ENCODE measurements at regions of chr14 and their contacts with region 1.

Region 1: DNA sequence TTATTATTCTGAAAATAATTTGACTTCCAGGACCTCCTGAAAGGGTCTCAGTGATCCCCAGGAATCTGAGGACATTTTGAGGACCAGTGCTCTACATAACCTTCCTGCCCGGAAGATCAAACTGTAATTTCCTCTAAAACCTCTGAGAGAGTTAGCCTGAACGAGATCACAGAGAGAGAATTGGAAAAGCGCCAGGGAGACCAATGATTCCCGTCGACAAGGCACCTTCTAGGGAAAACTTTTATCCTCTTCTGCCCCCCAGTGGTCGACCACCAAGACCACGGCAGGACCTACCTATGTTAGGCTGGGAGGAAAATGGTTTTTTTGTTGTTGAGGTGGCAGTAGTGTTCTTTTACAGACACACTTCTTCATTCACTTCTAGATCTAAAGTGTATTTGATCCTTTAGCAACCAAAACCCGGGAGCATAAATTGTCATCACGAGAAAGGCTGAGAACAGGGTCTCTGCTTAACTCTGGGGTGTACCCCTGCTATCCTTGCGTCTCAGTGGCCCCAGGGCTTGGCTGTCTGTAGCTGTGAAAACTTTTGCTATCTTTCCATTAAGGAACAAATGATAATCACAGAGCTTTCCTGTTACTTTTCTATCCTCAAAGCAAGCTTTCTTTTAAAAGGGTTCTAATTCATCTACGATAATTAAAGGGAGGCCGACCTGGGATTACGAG is 62.9 kb upstream of the NID2 start:
- DNase-seq: peak; percentile 82 to 87
- ATAC-seq: peak; percentile 96 to 99
- H3K4me3 ChIP-seq: no peak overlapping the region
- H3K27ac ChIP-seq: peak overlapping the region in 1 of 2 experiments; percentile 37; a peak in 1 of 6 replicates
- H3K4me1 ChIP-seq: peaks cover 6% of the 10 kb centered on the region; the same call in 1 of the 3 replicates
- CTCF ChIP-seq: peak; percentile 74
- EP300 ChIP-seq: no peak
- POLR2A ChIP-seq: no peak
- RAD21 ChIP-seq: peak; percentile 87

Region 2: GRCh38 chr14:51996148-51996746 is 135.5 kb before region 1 on chr14:
- CTCF ChIA-PET with region 1: interaction called, 30 read pairs
- POLR2A ChIA-PET with region 1: no interaction called
- DNase-seq: peak in 1 of 2 experiments; percentile 54
- ATAC-seq: no peak
- H3K4me3 ChIP-seq: no peak overlapping the region
- H3K27ac ChIP-seq: no peak overlapping the region
- H3K4me1 ChIP-seq: peaks cover under 1% of the 10 kb centered on the region; the same call in 1 of the 3 replicates
- CTCF ChIP-seq: peak; percentile 70
- EP300 ChIP-seq: no peak
- POLR2A ChIP-seq: no peak
- RAD21 ChIP-seq: peak; percentile 60 to 74

Region 3: DNA sequence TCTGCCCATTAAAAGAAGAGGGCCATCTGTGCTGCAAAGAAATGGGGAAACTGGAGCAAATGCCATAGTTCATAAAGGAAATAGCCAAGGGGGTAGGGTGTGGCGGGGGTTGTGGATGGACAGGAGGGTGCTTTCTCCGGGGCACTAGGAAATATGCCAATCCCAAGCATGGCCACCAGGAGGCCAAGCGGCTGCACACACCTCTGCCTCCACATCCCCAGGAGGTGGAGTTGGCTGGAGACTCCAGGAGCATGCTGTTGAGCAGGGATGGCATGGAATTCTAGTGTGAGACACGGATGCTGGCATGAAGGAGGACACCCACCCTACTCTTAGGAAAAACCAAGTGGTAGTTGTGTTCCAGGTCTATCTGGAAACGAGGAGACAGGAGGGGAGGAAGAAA is 88.1 kb before region 1 on chr14:
- CTCF ChIA-PET with region 1: interaction called, 68 read pairs
- POLR2A ChIA-PET with region 1: no interaction called
- DNase-seq: peak; percentile 60 to 73
- ATAC-seq: peak; percentile 86 to 98
- H3K4me3 ChIP-seq: no peak overlapping the region
- H3K27ac ChIP-seq: no peak overlapping the region
- H3K4me1 ChIP-seq: peaks cover 19% of the 10 kb centered on the region
- CTCF ChIP-seq: peak; percentile 55
- EP300 ChIP-seq: no peak
- POLR2A ChIP-seq: no peak
- RAD21 ChIP-seq: peak; percentile 64

Region 4: GRCh38 chr14:52106840-52107239 is 24.9 kb before region 1 on chr14:
- CTCF ChIA-PET with region 1: interaction called, 10 read pairs
- POLR2A ChIA-PET with region 1: no interaction called
- DNase-seq: peak in 1 of 2 experiments; percentile 2
- ATAC-seq: peak in 1 of 2 experiments; percentile 56; a peak in 3 of 6 replicates
- H3K4me3 ChIP-seq: no peak overlapping the region
- H3K27ac ChIP-seq: peak overlapping the region; percentile 56 to 70; a peak in 5 of 6 replicates
- H3K4me1 ChIP-seq: peaks cover 31% of the 10 kb centered on the region
- CTCF ChIP-seq: no peak
- EP300 ChIP-seq: no peak
- POLR2A ChIP-seq: no peak
- RAD21 ChIP-seq: no peak

Region 5: DNA sequence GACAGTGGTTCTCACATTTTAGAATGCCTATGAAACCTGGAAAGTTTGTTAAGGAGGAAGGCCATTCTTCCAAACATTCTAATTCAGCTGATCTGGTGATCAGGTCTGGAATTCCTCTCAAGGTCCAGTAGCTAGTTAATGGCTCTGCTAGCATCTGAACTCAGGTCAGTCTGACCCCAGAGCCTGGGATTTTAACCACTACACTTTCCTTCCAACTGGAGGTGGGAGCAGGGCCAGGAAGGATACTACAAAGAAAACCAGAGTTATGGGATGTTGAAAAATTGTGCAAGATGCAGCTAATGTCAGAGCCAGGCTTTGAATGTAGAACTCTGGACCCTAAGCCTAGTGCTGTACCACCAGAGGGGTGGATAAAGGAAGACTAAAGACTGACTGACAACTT is 10.7 kb after region 1 on chr14:
- CTCF ChIA-PET with region 1: interaction called, 24 read pairs
- POLR2A ChIA-PET with region 1: no interaction called
- DNase-seq: no peak
- ATAC-seq: no peak
- H3K4me3 ChIP-seq: no peak overlapping the region
- H3K27ac ChIP-seq: no peak overlapping the region
- H3K4me1 ChIP-seq: no peaks in the 10 kb centered on the region
- CTCF ChIP-seq: no peak
- EP300 ChIP-seq: no peak
- POLR2A ChIP-seq: no peak
- RAD21 ChIP-seq: no peak